OCI-LY7 (cell line): ENCODE measurements at regions of chr12 and their contacts with region 1.

Region 1: DNA sequence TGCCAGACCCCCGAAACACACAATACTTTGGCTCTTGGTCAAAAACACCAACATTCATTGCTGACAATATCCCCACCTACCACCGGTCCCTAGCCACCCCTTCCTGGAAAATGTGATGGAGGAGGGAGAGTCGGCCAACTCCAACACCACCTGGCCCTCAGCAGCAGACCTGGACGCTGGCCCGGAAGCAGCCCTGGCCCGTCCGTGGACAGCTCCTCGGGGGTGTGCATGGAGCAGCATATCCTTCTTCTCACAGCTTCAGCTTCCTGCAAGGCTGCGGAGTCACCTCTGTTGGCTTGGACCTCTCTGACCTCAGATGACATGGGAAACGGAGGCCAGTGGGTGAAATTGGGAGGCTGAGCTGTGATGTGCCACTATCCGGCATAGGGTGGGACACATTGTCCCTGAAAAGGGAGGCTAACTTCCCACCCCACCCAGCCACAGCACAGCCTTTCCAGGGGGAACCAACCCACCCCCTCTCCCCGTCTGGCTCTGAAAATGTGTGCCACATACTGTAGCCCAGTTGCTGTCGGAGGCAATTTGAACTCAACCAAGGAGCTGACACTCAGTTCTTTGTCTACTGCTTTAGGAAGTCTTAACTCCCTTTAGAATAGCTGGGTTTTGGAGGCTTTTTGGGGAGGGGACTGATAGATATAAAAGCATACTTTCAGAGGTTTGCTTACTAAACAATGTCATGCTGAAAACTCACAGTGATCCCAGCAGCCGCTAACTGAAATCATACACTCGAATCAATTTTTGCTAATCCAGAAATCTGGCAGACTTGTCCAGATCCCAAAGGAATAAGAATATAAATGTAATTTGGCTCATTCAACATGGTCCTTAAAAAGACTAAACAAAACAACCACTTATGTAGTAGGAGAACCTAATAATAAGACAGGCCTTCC is 43.1 kb upstream of the LTA4H start:
- DNase-seq: no peak
- H3K4me3 ChIP-seq: no peak overlapping the region
- H3K27ac ChIP-seq: no peak overlapping the region
- H3K4me1 ChIP-seq: no peaks in the 10 kb centered on the region
- CTCF ChIP-seq: no peak

Region 2: DNA sequence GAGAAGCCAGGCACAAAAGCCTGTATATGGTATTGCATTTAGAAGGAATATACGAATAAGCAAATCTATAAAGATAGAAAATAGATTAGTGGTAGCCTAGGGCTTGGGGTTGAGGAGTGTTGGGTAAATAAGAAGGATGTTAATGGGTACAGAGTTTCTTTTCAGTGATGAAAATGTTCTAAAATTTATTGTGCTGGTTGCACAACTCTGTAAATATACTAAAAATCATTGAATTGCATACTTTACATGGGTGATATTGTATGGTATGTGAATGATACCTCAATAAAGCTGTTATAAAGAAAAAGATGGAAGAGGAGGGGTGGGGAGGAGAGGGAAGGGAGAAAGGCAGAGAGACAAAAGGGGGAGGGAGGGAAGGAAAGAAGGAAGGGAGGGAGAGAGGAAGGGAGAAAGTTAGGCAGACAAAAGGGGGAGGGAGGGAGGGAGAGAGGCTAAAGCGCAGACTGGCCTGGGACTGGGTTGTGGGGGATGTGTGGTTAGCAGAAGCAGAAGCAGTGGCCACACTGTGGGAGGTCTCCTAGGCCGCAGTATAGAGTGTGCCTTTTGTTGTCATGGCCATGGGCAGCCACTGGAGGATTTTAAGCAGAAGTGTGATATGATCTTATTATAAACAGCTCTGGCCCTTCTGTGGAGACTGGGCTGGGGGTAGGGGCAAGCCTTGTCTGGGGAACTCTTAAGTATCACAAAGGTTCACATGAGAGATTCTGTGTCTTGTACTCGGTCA is 42.0 kb after region 1 on chr12:
- CTCF ChIA-PET with region 1: interaction called, 3 read pairs
- POLR2A ChIA-PET with region 1: no interaction called
- intact Hi-C with region 1: loop called (anchors 5 kb)
- DNase-seq: no peak
- H3K4me3 ChIP-seq: no peak overlapping the region
- H3K27ac ChIP-seq: no peak overlapping the region
- H3K4me1 ChIP-seq: no peaks in the 10 kb centered on the region
- CTCF ChIP-seq: no peak

Region 3: DNA sequence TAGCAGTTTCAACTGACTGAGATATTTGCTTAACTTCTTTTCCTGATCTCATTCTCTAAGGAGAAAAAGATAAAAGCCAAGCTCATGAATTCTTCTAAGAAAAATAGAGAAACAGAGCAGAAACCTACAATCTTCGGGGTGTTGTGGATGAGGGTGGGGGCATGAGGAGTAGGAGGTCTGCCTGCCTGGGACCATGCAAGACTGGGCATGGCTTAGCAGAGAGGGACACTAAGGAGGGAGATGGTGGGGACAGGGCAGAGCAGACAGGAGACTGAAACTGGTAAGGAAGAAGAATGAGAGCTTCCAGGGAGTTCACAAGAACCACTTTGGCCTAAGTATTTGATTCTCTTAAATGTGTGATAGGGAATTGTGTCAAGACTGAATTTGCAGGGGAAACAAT is 598.9 kb after region 1 on chr12:
- CTCF ChIA-PET with region 1: interaction called, 21 read pairs
- POLR2A ChIA-PET with region 1: no interaction called
- intact Hi-C with region 1: no loop called
- DNase-seq: no peak
- H3K4me3 ChIP-seq: no peak overlapping the region
- H3K27ac ChIP-seq: no peak overlapping the region
- H3K4me1 ChIP-seq: no peaks in the 10 kb centered on the region
- CTCF ChIP-seq: no peak